ENCODE measurements at regions of chr4 and their contacts with region 1.

Region 1: GRCh38 chr4:169270810-169271691 is at the start of gene SH3RF1:
- DNase-seq: peak; percentile 89
- H3K4me3 Mint-ChIP-seq: peak within 1 kb of the TSS; percentile 59
- H3K27ac Mint-ChIP-seq: peak within 1 kb of the TSS; percentile 13
- H3K4me1 Mint-ChIP-seq: peaks cover 27% of the 10 kb centered on the region
- H3K27me3 Mint-ChIP-seq: no peaks in the 10 kb centered on the region
- CTCF ChIP-seq: no peak
- total RNA-seq, gene SH3RF1: 16.5 and 17.4 TPM in 2 replicates

Region 2: DNA sequence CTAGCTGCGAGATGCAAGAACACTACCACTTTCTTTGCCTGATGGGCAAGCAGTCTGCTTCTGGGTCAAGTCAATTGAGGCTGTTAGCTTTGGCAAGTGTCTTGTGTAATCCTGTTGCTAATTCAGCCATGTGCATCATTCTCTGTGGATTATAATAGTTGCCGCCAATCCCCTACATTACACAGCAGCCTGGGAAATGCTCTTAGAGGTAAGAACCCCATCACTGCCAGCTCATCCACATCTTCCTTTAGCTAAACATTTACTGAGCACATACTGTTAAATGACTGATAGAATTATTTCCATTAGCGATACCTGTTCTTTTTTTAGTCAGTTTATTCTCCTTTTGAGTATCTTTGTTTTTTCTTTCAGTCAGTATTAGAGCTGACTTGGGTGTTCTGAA is 377.2 kb before region 1 on chr4:
- CTCF ChIA-PET with region 1: no interaction called
- POLR2A ChIA-PET with region 1: no interaction called
- intact Hi-C with region 1: no loop called
- DNase-seq: no peak
- H3K4me3 Mint-ChIP-seq: no peak overlapping the region
- H3K27ac Mint-ChIP-seq: peak overlapping the region; percentile 15
- H3K4me1 Mint-ChIP-seq: peaks cover 4% of the 10 kb centered on the region
- H3K27me3 Mint-ChIP-seq: no peaks in the 10 kb centered on the region
- CTCF ChIP-seq: no peak

Region 3: GRCh38 chr4:169024762-169025161 is 246.3 kb before region 1 on chr4:
- CTCF ChIA-PET with region 1: interaction called, 6 read pairs
- POLR2A ChIA-PET with region 1: interaction called, 3 read pairs
- intact Hi-C with region 1: loop called (anchors 1 kb)
- DNase-seq: peak; percentile 51
- H3K4me3 Mint-ChIP-seq: no peak overlapping the region
- H3K27ac Mint-ChIP-seq: no peak overlapping the region
- H3K4me1 Mint-ChIP-seq: no peaks in the 10 kb centered on the region
- H3K27me3 Mint-ChIP-seq: no peaks in the 10 kb centered on the region
- CTCF ChIP-seq: peak; percentile 68

Region 4: DNA sequence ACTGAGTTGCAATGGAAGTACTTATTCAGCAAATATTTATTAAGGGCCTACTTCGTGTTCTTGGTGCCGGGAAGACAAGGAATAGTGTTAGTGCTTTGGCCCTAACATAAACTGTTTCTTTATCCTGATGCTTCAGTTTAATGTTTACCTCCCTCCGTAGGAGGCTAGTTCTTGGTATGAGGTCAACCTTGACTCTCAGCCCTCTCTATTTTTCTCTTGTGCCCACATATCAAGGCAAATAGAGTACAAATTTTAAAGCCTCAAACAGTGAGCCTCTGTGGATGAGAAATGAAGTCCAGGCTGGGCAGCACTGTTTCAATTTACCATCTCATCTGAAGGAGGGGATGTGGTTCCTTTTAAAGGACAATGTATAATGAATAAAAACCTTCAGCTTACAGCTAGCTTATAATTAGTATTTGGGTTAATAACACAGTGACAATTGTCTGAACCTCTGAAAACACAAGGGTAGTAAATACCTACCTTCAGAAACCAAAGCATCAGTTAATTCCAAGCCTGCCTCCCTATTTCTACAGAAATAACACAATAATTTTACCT is 68.8 kb before region 1 on chr4:
- CTCF ChIA-PET with region 1: no interaction called
- POLR2A ChIA-PET with region 1: interaction called, 10 read pairs
- intact Hi-C with region 1: no loop called
- DNase-seq: no peak
- H3K4me3 Mint-ChIP-seq: no peak overlapping the region
- H3K27ac Mint-ChIP-seq: no peak overlapping the region
- H3K4me1 Mint-ChIP-seq: peaks cover 18% of the 10 kb centered on the region
- H3K27me3 Mint-ChIP-seq: no peaks in the 10 kb centered on the region
- CTCF ChIP-seq: no peak

Region 5: GRCh38 chr4:169238445-169238844 is 32.6 kb before region 1 on chr4:
- CTCF ChIA-PET with region 1: interaction called, 4 read pairs
- POLR2A ChIA-PET with region 1: interaction called, 41 read pairs
- intact Hi-C with region 1: no loop called
- DNase-seq: peak; percentile 59
- H3K4me3 Mint-ChIP-seq: no peak overlapping the region
- H3K27ac Mint-ChIP-seq: no peak overlapping the region
- H3K4me1 Mint-ChIP-seq: peaks cover 39% of the 10 kb centered on the region
- H3K27me3 Mint-ChIP-seq: no peaks in the 10 kb centered on the region
- CTCF ChIP-seq: no peak

Region 6: GRCh38 chr4:169383724-169384123 is 112.7 kb after region 1 on chr4:
- CTCF ChIA-PET with region 1: no interaction called
- POLR2A ChIA-PET with region 1: no interaction called
- intact Hi-C with region 1: loop called (anchors 10 kb)
- DNase-seq: peak; percentile 66
- H3K4me3 Mint-ChIP-seq: no peak overlapping the region
- H3K27ac Mint-ChIP-seq: no peak overlapping the region
- H3K4me1 Mint-ChIP-seq: peaks cover 11% of the 10 kb centered on the region
- H3K27me3 Mint-ChIP-seq: no peaks in the 10 kb centered on the region
- CTCF ChIP-seq: no peak

Region 7: GRCh38 chr4:169881769-169882168 is 610.7 kb after region 1 on chr4:
- CTCF ChIA-PET with region 1: no interaction called
- POLR2A ChIA-PET with region 1: no interaction called
- intact Hi-C with region 1: no loop called
- DNase-seq: no peak
- H3K4me3 Mint-ChIP-seq: no peak overlapping the region
- H3K27ac Mint-ChIP-seq: no peak overlapping the region
- H3K4me1 Mint-ChIP-seq: no peaks in the 10 kb centered on the region
- H3K27me3 Mint-ChIP-seq: no peaks in the 10 kb centered on the region
- CTCF ChIP-seq: no peak

Measured in MCF 10A (cell line).